ENCODE measurements at regions of chr4 and their contacts with region 1.

Region 1: GRCh38 chr4:27005501-27005900 is 144.9 kb downstream of the STIM2 start:
- DNase-seq: no peak

Region 2: DNA sequence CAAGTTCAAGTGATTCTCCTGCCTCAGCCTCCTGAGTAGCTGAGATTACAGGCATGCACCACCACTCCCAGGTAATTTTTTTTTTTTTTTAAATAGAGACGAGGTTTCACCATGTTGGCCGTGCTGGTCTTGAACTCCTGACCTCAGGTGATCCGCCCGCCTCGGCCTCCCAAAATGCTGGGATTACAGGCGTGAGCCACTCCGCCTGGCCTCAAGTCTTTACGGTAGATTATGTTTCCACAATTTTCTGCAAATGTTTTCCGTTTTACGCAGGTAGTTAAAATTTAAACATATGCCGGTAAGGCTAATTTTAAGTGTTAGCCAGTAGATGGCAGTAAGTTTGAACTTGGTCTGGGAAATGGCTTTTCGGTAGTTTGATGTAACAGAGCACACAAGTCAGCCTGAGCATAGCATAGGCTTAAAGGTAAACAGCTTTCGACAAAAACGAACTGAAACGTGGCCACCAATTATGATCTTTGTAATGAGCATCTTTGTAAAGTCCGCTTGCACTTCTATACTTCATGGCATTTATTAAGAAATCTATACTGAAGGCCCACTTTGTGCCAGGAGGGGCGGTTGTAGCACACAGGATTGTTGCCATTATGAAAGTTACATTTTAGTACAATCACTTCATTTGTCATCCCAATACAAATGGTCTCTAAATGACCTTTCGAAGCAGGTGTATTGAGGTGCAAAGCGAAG is 546.3 kb before region 1 on chr4:
- intact Hi-C with region 1: loop called (anchors 2 kb)
- DNase-seq: no peak

Region 3: GRCh38 chr4:26731351-26732035 is 274.0 kb before region 1 on chr4:
- intact Hi-C with region 1: loop called (anchors 5 kb)
- DNase-seq: no peak